ENCODE measurements at regions of chr10 and their contacts with region 1.

Region 1: GRCh38 chr10:25080880-25081581 is 64.6 kb downstream of the THNSL1 start:
- DNase-seq: peak; percentile 59
- H3K4me3 ChIP-seq: no peak overlapping the region
- H3K27ac ChIP-seq: no peak overlapping the region
- H3K4me1 ChIP-seq: no peaks in the 10 kb centered on the region
- CTCF ChIP-seq: peak; percentile 94

Region 2: GRCh38 chr10:24642622-24643417 is 438.2 kb before region 1 on chr10:
- CTCF ChIA-PET with region 1: no interaction called
- POLR2A ChIA-PET with region 1: no interaction called
- intact Hi-C with region 1: loop called (anchors 2 kb)
- DNase-seq: peak; percentile 56
- H3K4me3 ChIP-seq: no peak overlapping the region
- H3K27ac ChIP-seq: no peak overlapping the region
- H3K4me1 ChIP-seq: no peaks in the 10 kb centered on the region
- CTCF ChIP-seq: peak; percentile 88

Region 3: DNA sequence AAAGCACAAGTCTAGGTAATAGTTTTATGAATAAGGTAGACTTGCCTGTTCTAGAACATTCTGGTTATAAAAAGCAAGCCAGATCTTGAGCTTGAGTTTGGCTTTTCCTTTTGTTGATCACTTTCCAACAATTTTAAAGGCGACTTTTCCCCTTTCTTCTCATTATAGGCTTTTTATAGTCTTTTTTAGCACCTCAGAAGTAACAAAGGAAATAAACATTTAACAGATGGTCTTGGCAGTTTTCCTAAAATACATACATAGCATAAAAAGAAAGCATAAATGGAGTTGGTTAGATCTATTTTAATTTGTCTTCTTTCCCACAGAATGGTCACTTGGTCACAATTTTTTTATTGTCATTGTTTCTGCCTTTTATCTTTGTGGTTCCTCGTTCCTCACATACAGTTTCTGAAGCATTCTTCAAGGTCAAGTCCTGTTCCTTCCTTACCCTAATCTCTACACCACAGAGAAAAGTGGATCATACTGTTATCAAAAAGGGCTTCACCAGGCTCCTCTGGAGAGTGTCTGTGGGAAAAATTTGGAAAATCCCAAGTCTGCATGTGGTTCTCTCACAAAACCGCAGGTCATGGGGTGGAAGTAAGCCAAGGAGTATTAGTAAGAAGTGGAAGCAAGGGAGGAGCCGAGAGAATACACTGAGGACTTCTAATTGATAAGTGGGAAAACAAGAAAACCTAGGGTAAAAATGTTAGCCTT is 33.3 kb before region 1 on chr10:
- CTCF ChIA-PET with region 1: no interaction called
- POLR2A ChIA-PET with region 1: no interaction called
- intact Hi-C with region 1: no loop called
- DNase-seq: no peak
- H3K4me3 ChIP-seq: no peak overlapping the region
- H3K27ac ChIP-seq: no peak overlapping the region
- H3K4me1 ChIP-seq: no peaks in the 10 kb centered on the region
- CTCF ChIP-seq: no peak

Region 4: DNA sequence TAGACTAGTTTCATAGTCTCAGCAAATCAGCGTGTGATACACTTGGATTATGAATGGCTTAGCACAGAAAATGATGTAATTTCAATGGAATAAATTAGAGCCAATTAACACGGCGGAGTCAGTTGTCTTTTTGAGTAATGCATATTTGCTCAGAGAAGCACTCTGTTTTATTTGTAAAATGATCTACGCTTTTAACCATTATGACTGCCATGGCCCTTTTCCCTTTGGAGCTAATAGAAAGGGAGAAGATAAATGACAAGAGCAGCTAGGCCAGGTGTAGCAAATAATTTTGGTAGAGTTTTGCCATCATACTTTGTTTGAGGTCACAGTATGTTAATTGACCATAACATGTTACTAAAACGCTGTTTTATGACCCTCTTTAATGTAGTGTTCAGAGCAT is 180.5 kb after region 1 on chr10:
- CTCF ChIA-PET with region 1: no interaction called
- POLR2A ChIA-PET with region 1: no interaction called
- intact Hi-C with region 1: no loop called
- DNase-seq: no peak
- H3K4me3 ChIP-seq: no peak overlapping the region
- H3K27ac ChIP-seq: no peak overlapping the region
- H3K4me1 ChIP-seq: no peaks in the 10 kb centered on the region
- CTCF ChIP-seq: no peak